Activated naive CD4-positive, alpha-beta T cell treated with anti-CD3 and anti-CD28 coated beads for 36 hours (primary cell): ENCODE measurements at regions of chr3 and their contacts with region 1.

Region 1: GRCh38 chr3:169662132-169662842 is 1.2 kb downstream of the MECOM start:
- DNase-seq: peak; percentile 51
- H3K4me3 Mint-ChIP-seq: peak overlapping the region; percentile 78
- H3K27ac Mint-ChIP-seq: no peak overlapping the region
- H3K4me1 Mint-ChIP-seq: peaks cover 39% of the 10 kb centered on the region
- H3K27me3 Mint-ChIP-seq: peaks cover 80% of the 10 kb centered on the region

Region 2: GRCh38 chr3:169149349-169149890 is 512.9 kb before region 1 on chr3:
- CTCF ChIA-PET with region 1: interaction called, 22 read pairs
- intact Hi-C with region 1: loop called (anchors 1 kb)
- DNase-seq: peak; percentile 82
- H3K4me3 Mint-ChIP-seq: peak overlapping the region; percentile 65
- H3K27ac Mint-ChIP-seq: no peak overlapping the region
- H3K4me1 Mint-ChIP-seq: peaks cover 20% of the 10 kb centered on the region
- H3K27me3 Mint-ChIP-seq: peaks cover 63% of the 10 kb centered on the region

Region 3: GRCh38 chr3:169509359-169509758 is 152.9 kb before region 1 on chr3:
- CTCF ChIA-PET with region 1: no interaction called
- intact Hi-C with region 1: loop called (anchors 5 kb)
- DNase-seq: peak; percentile 7
- H3K4me3 Mint-ChIP-seq: no peak overlapping the region
- H3K27ac Mint-ChIP-seq: no peak overlapping the region
- H3K4me1 Mint-ChIP-seq: peaks cover 11% of the 10 kb centered on the region
- H3K27me3 Mint-ChIP-seq: no peaks in the 10 kb centered on the region

Region 4: DNA sequence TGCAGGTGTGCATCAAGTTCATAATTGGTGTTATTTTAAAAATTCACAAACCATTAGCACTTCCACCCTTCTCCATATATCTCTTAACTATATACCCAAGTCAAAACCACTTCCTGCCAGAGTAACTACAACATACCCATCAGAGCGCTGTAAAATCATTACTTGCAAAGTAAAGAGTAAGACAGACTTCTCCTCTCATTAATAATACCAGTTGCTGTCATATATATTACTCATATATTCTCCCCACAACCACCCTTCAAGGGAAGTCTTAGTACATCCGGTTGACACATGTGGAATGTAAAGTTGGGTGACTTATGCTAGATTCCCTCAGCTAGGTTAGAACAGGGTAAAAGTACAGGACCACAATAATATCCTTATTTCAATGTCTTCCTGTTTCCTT is 97.0 kb after region 1 on chr3:
- CTCF ChIA-PET with region 1: no interaction called
- intact Hi-C with region 1: loop called (anchors 5 kb)
- DNase-seq: peak; percentile 24
- H3K4me3 Mint-ChIP-seq: no peak overlapping the region
- H3K27ac Mint-ChIP-seq: peak overlapping the region; percentile 62
- H3K4me1 Mint-ChIP-seq: peaks cover 25% of the 10 kb centered on the region
- H3K27me3 Mint-ChIP-seq: no peaks in the 10 kb centered on the region

Region 5: DNA sequence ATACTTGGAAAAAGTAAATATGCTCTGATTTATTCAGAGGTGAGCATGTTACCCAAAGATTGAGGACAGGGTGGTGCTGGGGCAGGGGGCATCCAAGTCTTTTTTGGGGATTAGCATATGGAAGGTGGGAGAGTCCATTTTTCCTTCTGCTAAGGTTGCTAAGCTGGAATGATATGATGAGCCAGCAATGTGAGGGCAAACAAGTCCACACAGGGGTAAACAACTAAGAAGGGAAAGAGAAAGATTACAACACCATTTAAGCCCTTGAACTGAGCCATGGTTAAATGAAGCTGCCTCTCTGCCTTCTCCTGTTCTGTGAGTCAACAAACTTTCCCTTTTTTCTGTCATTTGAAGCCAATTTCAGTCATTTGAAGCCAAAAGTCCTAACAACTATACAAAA is 1118.7 kb after region 1 on chr3:
- CTCF ChIA-PET with region 1: no interaction called
- intact Hi-C with region 1: no loop called
- DNase-seq: no peak
- H3K4me3 Mint-ChIP-seq: no peak overlapping the region
- H3K27ac Mint-ChIP-seq: no peak overlapping the region
- H3K4me1 Mint-ChIP-seq: no peaks in the 10 kb centered on the region
- H3K27me3 Mint-ChIP-seq: peaks cover 29% of the 10 kb centered on the region